Right ventricle myocardium superior (tissue), 1 donor: ENCODE measurements at regions of chrX and their contacts with region 1.

Region 1: DNA sequence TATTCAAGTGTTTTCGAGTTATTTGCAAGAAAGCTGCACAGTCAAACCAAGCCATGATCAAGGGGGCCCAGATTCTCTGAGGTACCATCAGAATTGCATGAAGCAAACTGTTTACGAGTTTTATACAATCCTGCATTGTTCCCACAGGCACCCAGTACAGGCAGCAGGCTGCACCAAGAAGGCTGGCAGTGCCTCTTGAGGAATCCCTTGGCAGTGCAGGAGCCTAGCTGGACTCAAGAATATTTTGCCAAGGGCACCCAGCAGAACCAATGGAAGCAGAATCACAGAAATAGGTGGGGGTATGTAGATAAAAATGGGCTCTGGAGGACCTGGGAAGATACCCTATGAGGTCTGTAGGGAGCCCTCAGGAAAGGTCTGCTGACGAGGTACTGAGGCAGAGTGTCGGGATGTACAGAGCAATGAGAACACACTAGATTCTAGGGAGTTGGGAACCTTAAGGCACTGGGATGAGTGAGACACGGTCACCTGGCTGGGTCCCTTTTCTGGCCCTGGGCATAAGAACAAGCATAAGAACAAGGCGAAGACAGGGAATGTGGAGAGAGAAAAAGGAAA is 2.5 kb upstream of the PLP1 start:
- DNase-seq: no peak
- ATAC-seq: peak; percentile 58

Region 2: DNA sequence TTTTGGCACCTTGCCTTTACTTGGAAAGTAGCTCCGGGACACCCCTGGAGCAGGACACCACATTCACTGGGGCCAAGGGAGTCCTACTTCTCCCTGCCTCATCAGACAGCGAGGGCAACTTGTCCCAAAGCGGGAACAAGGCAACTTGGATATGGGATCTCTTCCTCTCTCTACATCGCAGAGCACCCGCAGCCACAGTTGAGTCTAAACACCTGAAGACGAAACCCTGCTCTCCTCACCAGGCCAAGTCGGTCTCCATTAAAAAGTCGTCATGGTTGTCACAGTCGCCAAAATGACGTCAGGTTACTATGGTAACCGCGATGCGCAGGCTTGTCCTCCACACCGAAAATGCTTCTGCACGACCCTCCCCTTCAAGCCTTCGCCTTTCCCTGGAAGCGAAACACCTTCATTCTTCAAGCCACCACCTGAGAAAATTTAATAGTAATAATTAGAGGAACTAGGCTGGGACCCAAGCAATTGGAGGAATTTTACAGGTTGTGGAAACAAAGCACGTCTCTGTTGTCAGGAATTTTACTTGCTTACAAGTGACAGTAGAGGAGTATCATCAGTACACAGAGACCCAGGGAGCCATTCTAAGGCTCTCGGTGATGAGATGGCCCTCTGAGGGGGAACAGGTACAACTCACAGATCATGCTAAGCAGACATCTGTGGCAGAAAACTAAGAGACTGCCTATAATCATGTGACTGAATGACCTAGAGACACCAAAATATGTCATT is 219.3 kb before region 1 on chrX:
- intact Hi-C with region 1: no loop called
- DNase-seq: peak; percentile 40
- ATAC-seq: no peak

Region 3: GRCh38 chrX:103697687-103698086 is 76.5 kb before region 1 on chrX:
- intact Hi-C with region 1: loop called (anchors 10 kb)
- DNase-seq: no peak
- ATAC-seq: no peak